ENCODE measurements at regions of chr6 and their contacts with region 1.

Region 1: GRCh38 chr6:132131758-132132157 is 180.6 kb upstream of the CCN2 start:
- DNase-seq: no peak
- H3K4me3 ChIP-seq: no peak overlapping the region
- H3K27ac ChIP-seq: peak overlapping the region; percentile 65 to 72
- H3K4me1 ChIP-seq: no peaks in the 10 kb centered on the region
- H3K27me3 ChIP-seq: no peaks in the 10 kb centered on the region
- CTCF ChIP-seq: no peak
- POLR2A ChIP-seq: no peak

Region 2: GRCh38 chr6:131840936-131841583 is 290.7 kb before region 1 on chr6:
- intact Hi-C with region 1: no loop called
- DNase-seq: no peak
- H3K4me3 ChIP-seq: no peak overlapping the region
- H3K27ac ChIP-seq: no peak overlapping the region
- H3K4me1 ChIP-seq: no peaks in the 10 kb centered on the region
- H3K27me3 ChIP-seq: no peaks in the 10 kb centered on the region
- CTCF ChIP-seq: no peak
- POLR2A ChIP-seq: no peak

Region 3: GRCh38 chr6:132084833-132085509 is 46.8 kb before region 1 on chr6:
- intact Hi-C with region 1: loop called (anchors 5 kb)
- DNase-seq: no peak
- H3K4me3 ChIP-seq: no peak overlapping the region
- H3K27ac ChIP-seq: peak overlapping the region; percentile 24
- H3K4me1 ChIP-seq: no peaks in the 10 kb centered on the region
- H3K27me3 ChIP-seq: no peaks in the 10 kb centered on the region
- CTCF ChIP-seq: no peak
- POLR2A ChIP-seq: no peak